Gastrocnemius medialis (tissue), 4 donors: ENCODE measurements at regions of chr6 and their contacts with region 1.

Region 1: DNA sequence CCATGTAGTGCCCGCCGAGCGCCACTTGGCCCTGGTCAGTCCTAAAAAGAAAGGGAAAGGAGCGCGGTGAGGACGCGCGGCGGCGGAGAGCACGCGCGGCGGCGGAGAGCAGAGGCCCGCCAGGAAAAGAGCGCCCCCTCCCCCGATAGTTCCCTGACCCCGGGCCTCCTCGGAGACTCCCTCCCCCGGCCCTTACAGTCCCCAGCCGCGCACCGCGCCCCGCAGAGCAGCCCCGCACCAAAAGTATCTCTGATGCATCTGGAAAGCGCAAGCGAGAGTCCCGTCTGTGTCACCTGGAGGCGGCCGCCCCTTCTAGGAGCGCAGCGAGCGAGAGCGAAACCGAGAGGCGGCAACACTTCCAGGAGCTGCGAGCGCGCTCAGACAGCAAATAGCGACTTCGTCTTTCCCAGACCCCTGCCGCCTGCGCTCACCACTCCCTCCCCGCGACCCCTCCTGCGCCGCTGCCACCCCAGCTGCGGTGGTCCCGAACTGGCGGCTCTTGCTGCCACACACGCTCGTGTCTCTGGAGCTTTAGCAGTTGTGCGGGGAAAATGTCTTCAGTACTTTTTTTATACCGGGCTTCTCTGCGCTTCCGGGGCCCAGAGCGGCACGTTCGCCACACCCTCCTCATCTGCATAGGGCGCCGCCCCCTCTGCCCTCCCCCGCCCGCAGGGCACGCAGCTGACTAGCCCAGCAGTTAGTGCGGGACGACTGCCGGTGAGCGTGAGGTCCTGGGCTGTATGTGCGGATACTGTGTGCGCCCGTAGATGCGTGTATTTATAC is at the start of gene TENT5A:
- DNase-seq: peak; percentile 92
- ATAC-seq: peak; percentile 74 to 78
- H3K4me3 ChIP-seq: peak within 1 kb of the TSS; percentile 81 to 99 (median 91)
- H3K27ac ChIP-seq: peak within 1 kb of the TSS; percentile 89 to 95 (median 94)
- H3K4me1 ChIP-seq: peaks cover 33 to 38% of the 10 kb centered on the region in 2 donors
- H3K27me3 ChIP-seq: no peaks in the 10 kb centered on the region
- CTCF ChIP-seq: peak in 1 of 5 experiments; percentile 33
- POLR2A ChIP-seq: peak; percentile 85
- total RNA-seq, gene TENT5A: 2.4 to 3.1 (median 2.8) TPM

Region 2: GRCh38 chr6:80106418-80107235 is 1645.7 kb before region 1 on chr6 and contains the start of gene BCKDHB:
- in situ Hi-C with region 1: no loop called
- intact Hi-C with region 1: loop called (anchors 1 kb)
- DNase-seq: peak; percentile 98 to 99
- ATAC-seq: peak; percentile 99 to 100
- H3K4me3 ChIP-seq: peak within 1 kb of the TSS; percentile 80 to 83 (median 81)
- H3K27ac ChIP-seq: peak within 1 kb of the TSS; percentile 87 to 93 (median 88)
- H3K4me1 ChIP-seq: peaks cover 11 to 14% of the 10 kb centered on the region in 2 donors
- H3K27me3 ChIP-seq: no peaks in the 10 kb centered on the region
- CTCF ChIP-seq: no peak
- POLR2A ChIP-seq: peak; percentile 87 to 92
- total RNA-seq, gene BCKDHB: 1.6 to 6.9 (median 4.8) TPM

Region 3: DNA sequence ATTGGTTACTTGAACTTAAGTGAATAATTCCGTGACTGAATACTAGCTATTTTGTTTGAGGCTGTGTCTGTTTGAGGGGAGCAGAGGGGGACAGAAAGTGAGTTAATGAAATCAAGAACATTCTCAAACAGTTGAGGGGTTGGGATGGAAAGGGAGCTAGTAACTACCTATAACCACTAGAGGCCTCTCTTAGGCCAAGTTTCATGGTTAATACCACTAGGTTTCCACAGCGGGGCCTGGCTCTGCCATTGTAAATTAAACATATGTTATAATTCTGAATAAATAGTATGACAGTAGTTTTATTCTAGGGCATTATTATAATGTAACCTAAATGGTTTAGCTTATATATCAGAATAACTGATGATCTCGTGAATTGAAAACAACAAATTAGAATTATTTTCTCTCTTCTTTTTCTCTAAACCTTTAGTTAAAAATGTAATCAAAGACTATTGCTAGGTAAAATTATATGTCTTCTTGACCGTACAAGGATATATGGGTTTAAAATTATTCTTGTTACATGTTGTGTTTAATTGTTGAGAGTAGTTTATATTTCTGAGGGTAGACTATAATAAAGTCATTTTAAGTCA is 1537.8 kb before region 1 on chr6:
- in situ Hi-C with region 1: no loop called
- intact Hi-C with region 1: loop called (anchors 5 kb)
- DNase-seq: no peak
- ATAC-seq: peak; percentile 63 to 77
- H3K4me3 ChIP-seq: no peak overlapping the region
- H3K27ac ChIP-seq: no peak overlapping the region
- H3K4me1 ChIP-seq: peaks cover 15 to 21% of the 10 kb centered on the region in 2 donors
- H3K27me3 ChIP-seq: no peaks in the 10 kb centered on the region
- CTCF ChIP-seq: peak; percentile 21 to 77 (median 51)
- POLR2A ChIP-seq: no peak

Region 4: DNA sequence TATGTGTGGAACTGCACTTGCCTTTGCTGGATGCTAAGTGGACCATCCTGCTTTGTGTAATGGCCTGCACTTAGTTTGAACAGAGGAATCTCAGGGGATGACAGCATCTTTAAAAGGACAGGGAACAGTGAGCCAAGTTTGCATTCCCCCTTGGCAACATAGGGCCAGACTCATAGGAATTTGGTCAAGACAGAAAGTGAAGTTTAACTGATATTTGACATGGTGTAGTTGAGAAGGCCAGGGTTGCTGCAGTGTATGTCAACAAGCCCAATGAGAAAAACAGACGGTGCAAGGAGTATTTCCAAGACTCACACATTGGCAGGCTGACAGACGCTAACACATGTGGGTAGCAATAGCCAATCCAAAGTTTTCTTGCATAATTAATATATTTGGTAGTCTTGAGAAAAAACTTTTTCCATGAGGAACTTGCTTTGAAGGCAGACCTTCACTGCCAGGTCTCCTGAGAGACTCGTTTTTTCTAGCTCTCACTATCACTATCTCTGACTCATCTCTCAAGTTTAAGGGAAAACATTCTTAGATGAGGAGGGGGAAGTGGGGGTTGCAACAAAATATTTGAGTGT is 281.4 kb after region 1 on chr6:
- in situ Hi-C with region 1: no loop called
- intact Hi-C with region 1: loop called (anchors 10 kb)
- DNase-seq: peak; percentile 18 to 49
- ATAC-seq: peak; percentile 73 to 79
- H3K4me3 ChIP-seq: no peak overlapping the region
- H3K27ac ChIP-seq: peak overlapping the region in 1 of 4 donors; percentile 56
- H3K4me1 ChIP-seq: no peaks in the 10 kb centered on the region
- H3K27me3 ChIP-seq: no peaks in the 10 kb centered on the region
- CTCF ChIP-seq: no peak
- POLR2A ChIP-seq: no peak